ENCODE measurements at regions of chr10 and their contacts with region 1.

Region 1: DNA sequence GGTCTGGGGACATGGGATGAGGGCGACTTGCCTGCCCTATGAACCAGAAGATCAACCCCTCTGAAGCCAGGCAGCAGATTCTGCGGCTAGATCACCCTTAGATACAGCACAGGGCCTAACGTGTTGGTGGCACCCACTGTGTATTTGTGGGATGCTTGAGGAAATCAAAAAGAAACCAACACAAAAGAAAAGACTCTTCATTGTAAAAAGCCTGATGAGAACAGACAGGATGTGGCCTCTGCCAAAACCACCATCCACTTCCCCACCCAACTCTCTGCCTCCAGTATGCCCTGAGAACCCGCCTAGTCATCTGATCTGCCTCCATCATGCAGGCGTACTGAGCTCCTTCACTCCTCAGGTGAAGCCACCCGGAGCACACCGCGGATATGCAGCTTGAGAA is 97.2 kb upstream of the INSYN2A start:
- DNase-seq: peak; percentile 80
- H3K4me3 Mint-ChIP-seq: no peak overlapping the region
- H3K27ac Mint-ChIP-seq: no peak overlapping the region
- H3K4me1 Mint-ChIP-seq: peaks cover 27% of the 10 kb centered on the region
- H3K27me3 Mint-ChIP-seq: peaks cover 35% of the 10 kb centered on the region

Region 2: GRCh38 chr10:125886914-125887515 is 1406.6 kb before region 1 on chr10:
- CTCF ChIA-PET with region 1: no interaction called
- intact Hi-C with region 1: loop called (anchors 10 kb)
- DNase-seq: no peak
- H3K4me3 Mint-ChIP-seq: no peak overlapping the region
- H3K27ac Mint-ChIP-seq: no peak overlapping the region
- H3K4me1 Mint-ChIP-seq: no peaks in the 10 kb centered on the region
- H3K27me3 Mint-ChIP-seq: no peaks in the 10 kb centered on the region

Region 3: GRCh38 chr10:127254276-127254675 is 39.4 kb before region 1 on chr10:
- CTCF ChIA-PET with region 1: no interaction called
- intact Hi-C with region 1: loop called (anchors 1 kb)
- DNase-seq: peak; percentile 14
- H3K4me3 Mint-ChIP-seq: no peak overlapping the region
- H3K27ac Mint-ChIP-seq: no peak overlapping the region
- H3K4me1 Mint-ChIP-seq: peaks cover 13% of the 10 kb centered on the region
- H3K27me3 Mint-ChIP-seq: peaks cover 24% of the 10 kb centered on the region

Measured in activated naive CD4-positive, alpha-beta T cell treated with anti-CD3 and anti-CD28 coated beads for 36 hours (primary cell).